ENCODE measurements at regions of chr6 and their contacts with region 1.

Region 1: GRCh38 chr6:24974182-24975171 is 38.7 kb upstream of the RIPOR2 start:
- DNase-seq: no peak
- ATAC-seq: peak; percentile 81
- H3K4me3 Mint-ChIP-seq: peak overlapping the region; percentile 64
- H3K27ac Mint-ChIP-seq: peak overlapping the region; percentile 89
- H3K4me1 Mint-ChIP-seq: peaks cover 80% of the 10 kb centered on the region
- H3K27me3 Mint-ChIP-seq: no peaks in the 10 kb centered on the region
- CTCF ChIP-seq: no peak

Region 2: DNA sequence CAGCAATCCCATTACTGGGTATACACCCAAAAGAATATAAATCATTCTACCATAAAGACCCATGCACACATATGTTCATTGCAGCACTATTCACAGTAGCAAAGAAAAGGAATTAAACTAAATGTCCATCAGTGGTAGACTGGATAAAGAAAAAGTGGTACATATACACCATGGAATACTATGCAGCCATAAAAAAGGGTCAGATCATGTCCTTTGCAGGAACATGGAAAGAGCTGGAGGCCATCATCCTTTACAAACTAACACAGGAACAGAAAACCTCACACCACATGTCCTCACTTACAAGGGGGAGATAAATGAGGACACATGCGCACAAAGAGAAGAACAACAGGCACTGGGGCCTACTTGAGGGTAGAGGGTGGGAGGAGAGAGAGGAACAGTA is 677.5 kb before region 1 on chr6:
- CTCF ChIA-PET with region 1: no interaction called
- POLR2A ChIA-PET with region 1: no interaction called
- intact Hi-C with region 1: no loop called
- DNase-seq: no peak
- ATAC-seq: no peak
- H3K4me3 Mint-ChIP-seq: no peak overlapping the region
- H3K27ac Mint-ChIP-seq: no peak overlapping the region
- H3K4me1 Mint-ChIP-seq: no peaks in the 10 kb centered on the region
- H3K27me3 Mint-ChIP-seq: peaks cover 28% of the 10 kb centered on the region
- CTCF ChIP-seq: no peak

Region 3: DNA sequence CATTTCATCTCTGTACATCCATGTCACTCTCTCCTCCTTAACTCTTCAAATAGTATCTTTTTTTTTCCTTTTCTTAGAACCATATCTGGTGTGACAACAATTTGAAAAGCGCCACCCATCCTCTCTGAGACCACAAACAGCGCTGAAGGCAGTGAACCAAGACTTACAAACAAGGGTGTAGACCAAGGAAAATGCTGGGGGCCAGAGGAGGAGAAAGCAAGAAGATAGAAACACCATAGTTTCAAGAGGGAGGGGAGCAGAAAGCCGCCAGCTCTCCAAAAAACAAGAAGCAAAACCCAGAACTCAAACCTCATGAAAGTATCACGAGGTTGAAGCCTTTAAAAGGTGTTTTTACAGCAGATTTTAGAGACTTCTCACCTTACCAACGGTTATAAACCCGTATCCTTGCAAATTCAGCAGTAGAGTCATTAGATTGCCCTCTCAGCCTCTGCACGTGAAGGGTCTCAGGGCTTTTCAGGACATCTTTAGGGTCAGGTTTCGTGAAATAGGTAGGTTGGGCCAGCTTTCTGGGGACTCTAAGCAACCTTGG is 25.4 kb before region 1 on chr6:
- CTCF ChIA-PET with region 1: no interaction called
- POLR2A ChIA-PET with region 1: interaction called, 3 read pairs
- intact Hi-C with region 1: loop called (anchors 2 kb)
- DNase-seq: no peak
- ATAC-seq: peak; percentile 80
- H3K4me3 Mint-ChIP-seq: peak overlapping the region; percentile 65
- H3K27ac Mint-ChIP-seq: peak overlapping the region; percentile 94
- H3K4me1 Mint-ChIP-seq: peaks cover 85% of the 10 kb centered on the region
- H3K27me3 Mint-ChIP-seq: no peaks in the 10 kb centered on the region
- CTCF ChIP-seq: no peak

Region 4: DNA sequence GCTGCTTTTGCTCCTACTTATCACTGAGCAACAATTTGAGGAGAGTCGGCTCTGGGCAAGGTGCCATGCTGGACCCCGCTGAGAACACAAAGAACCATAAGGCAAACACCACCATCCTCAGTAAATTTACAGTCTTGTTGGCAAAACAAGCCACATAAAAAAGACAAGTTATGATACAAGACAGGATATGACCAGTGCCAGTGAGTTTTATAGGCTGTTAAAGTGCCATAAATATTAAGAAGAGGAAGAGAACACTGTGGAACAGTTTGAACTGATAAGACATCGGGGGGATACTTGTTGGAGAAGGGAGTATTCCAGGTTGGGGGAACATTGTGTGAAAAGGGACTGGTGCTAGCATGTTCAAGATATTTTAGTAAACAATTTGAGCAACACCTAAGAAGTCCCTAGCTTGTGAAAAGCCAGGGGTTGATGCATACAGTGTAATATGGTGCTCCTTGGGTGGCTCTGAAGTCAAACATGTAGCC is 13.4 kb before region 1 on chr6:
- CTCF ChIA-PET with region 1: no interaction called
- POLR2A ChIA-PET with region 1: interaction called, 5 read pairs
- intact Hi-C with region 1: loop called (anchors 2 kb)
- DNase-seq: no peak
- ATAC-seq: peak; percentile 14
- H3K4me3 Mint-ChIP-seq: no peak overlapping the region
- H3K27ac Mint-ChIP-seq: peak overlapping the region; percentile 33
- H3K4me1 Mint-ChIP-seq: peaks cover 90% of the 10 kb centered on the region
- H3K27me3 Mint-ChIP-seq: no peaks in the 10 kb centered on the region
- CTCF ChIP-seq: no peak

Region 5: DNA sequence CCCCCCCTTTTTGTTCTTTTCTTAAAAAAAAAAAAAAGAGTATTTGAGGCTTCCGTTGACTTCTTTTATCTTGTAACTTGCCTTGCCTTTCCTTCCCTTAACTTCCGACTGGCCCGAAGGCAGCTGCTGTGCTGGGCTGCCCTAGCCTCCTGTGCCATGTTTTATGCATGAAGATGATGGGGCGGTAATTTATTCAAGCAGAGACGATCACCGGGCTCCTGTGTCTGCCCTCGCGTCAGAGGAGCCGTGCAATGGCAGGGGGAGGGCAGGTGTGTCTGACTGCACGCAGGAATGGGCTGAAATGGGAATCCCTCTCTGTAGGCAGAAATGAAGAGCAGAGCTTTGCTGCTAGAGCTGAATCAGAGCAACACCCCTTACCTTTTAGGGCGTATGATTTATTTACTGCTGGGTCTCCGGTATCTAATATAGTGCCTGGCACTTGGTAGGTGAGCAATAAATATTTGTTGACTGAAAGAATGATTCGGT is 67.6 kb after region 1 on chr6:
- CTCF ChIA-PET with region 1: no interaction called
- POLR2A ChIA-PET with region 1: no interaction called
- intact Hi-C with region 1: no loop called
- DNase-seq: peak; percentile 53
- ATAC-seq: peak; percentile 65
- H3K4me3 Mint-ChIP-seq: peak overlapping the region; percentile 99
- H3K27ac Mint-ChIP-seq: peak overlapping the region; percentile 96
- H3K4me1 Mint-ChIP-seq: peaks cover 87% of the 10 kb centered on the region
- H3K27me3 Mint-ChIP-seq: no peaks in the 10 kb centered on the region
- CTCF ChIP-seq: no peak

Region 6: DNA sequence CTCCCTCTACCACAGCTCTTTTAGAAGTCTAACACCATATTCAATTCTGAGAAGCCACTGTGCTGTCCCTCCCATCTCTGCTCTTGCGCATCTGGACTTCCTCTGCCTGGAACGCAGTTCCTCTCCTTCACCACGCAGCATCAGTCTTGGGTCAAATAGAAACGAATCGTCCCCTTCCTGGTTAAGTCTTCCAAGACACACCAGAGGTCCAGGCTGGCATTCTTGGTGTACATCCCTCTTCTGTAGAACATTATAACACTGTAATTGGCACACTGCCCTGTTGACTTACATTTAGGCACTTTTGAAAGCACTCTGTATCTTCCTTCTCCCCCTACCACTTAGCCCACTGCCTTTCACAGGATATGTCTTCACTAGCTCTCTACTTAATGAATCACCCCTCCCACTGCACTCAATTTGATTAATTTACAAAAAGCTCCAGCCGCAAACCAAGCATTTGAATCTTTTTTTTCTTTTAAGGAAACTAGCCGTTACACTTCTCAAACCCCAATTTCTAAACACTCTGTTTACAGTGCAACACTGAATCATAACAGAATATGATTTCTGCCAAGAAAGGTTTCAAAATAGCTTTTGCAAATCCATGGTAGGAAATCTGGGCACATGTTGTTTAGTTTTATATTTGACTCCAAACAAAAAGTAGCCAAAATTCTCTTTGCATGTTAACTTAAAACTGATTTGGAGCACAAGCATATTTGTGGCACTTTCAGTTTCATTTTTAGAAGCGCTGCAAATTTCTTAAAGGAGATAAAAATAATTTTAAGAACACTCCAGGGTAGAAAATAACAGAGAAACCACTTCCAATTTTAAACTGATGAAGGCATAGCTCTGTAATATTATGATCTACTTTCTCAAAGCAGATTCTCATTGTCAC is 164.0 kb after region 1 on chr6:
- CTCF ChIA-PET with region 1: no interaction called
- POLR2A ChIA-PET with region 1: interaction called, 11 read pairs
- intact Hi-C with region 1: no loop called
- DNase-seq: peak; percentile 35
- ATAC-seq: peak; percentile 94
- H3K4me3 Mint-ChIP-seq: peak overlapping the region; percentile 87
- H3K27ac Mint-ChIP-seq: peak overlapping the region; percentile 98
- H3K4me1 Mint-ChIP-seq: peaks cover 36% of the 10 kb centered on the region
- H3K27me3 Mint-ChIP-seq: no peaks in the 10 kb centered on the region
- CTCF ChIP-seq: no peak

Region 7: DNA sequence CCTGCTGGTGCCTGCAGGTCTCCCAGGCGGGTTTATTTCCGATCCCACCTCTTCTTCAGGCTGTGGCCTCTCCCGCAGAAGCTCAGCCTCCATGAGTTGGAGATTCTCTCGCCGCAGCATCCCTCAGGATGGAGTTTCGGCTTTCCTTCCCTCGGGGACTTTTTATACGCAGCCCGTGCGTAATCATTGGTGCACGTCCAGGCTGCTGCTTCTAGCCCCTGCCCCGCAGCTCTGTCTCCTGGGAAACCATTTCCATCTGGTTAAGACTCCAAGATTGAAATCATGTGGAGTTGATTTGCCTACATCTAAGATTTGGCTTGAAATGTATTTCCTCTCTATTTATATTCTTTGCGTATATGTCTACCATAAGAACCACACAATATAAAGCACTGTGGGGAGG is 258.0 kb after region 1 on chr6:
- CTCF ChIA-PET with region 1: no interaction called
- POLR2A ChIA-PET with region 1: no interaction called
- intact Hi-C with region 1: no loop called
- DNase-seq: no peak
- ATAC-seq: no peak
- H3K4me3 Mint-ChIP-seq: no peak overlapping the region
- H3K27ac Mint-ChIP-seq: no peak overlapping the region
- H3K4me1 Mint-ChIP-seq: no peaks in the 10 kb centered on the region
- H3K27me3 Mint-ChIP-seq: no peaks in the 10 kb centered on the region
- CTCF ChIP-seq: no peak